Panc1 (cell line): ENCODE measurements at regions of chr6 and their contacts with region 1.

Region 1: DNA sequence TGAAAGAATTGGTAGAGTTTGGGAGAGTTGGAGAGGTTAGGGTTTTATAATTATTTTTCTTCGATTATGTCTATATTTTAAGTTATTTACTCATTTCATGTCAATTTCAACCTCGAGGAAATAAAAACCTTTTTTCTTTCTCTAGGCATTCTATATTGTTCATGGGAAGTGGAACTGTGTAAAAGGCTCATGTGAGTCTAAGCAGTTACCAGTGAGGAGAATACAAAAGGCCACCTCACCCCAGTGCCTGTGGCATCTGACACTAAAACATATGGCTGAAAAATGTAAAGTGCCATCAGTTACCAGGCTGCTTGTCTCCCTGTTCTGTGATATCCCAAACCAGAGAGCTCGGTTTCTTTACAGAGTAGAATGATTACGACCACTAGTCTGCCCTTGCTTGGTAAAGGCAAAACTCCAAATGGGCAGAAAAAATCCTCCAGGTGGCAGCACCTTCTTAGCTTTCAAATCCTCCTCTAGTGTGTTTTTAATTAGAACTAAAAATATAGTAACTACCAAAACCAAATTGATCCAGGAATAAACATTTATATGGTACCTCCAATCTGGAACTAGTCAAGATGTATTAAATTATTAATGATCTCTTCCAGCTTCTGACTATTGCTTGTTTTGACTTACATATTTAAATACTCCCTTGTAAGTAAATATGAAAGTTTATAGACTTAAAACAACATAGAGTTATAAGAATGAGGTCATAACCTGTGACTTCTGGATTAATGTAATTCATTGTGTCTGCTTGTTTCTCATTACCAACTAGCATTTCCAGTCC is 122.6 kb upstream of the MCHR2 start:
- DNase-seq: peak; percentile 56
- ATAC-seq: peak; percentile 87
- H3K4me3 ChIP-seq: no peak overlapping the region
- H3K27ac ChIP-seq: no peak overlapping the region
- H3K4me1 ChIP-seq: no peaks in the 10 kb centered on the region; the same call in 1 of the 2 replicates
- H3K27me3 ChIP-seq: no peaks in the 10 kb centered on the region
- CTCF ChIP-seq: peak; percentile 78

Region 2: DNA sequence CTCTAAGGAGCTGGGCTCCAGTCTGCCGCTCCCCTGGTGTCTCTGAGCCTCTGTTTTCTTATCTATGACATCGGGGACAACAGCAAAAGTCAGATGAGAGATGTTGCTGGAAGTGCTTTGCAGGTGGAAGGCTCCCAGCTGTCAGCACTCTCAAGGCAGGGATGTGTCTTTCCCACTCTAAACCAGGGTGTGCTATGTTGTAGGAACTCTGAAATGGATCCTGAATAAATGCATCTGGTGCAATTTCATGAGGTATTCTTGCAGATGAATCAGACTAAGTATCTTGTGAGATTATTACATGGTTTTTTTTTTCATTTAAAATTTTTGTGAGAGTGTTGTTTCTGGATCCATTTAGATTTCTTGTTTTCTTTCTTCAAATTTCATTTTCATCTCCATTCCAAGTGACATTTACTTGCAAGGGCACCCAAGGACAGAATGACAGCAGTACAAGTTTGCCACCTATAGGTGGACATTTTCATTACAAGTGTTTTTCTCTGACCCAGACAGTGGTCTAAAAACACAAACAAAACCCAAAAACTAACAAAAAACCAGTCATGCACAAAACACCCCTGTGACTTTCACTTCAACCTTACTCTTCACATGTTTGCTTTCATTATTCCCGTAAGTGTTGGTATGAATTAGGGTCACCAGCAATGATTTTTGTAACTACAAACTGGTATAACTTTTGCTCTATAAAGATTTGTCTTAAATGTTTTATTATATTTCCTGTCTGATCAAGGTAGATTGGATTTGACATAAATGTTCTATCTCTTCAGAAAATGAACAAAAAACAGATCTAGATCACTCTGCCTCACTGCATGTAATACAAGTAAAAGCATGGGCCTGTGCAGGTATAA is 362.8 kb after region 1 on chr6:
- CTCF ChIA-PET with region 1: no interaction called
- POLR2A ChIA-PET with region 1: no interaction called
- in situ Hi-C with region 1: no loop called
- intact Hi-C with region 1: loop called (anchors 1 kb)
- DNase-seq: peak; percentile 57
- ATAC-seq: peak; percentile 82
- H3K4me3 ChIP-seq: no peak overlapping the region
- H3K27ac ChIP-seq: no peak overlapping the region
- H3K4me1 ChIP-seq: no peaks in the 10 kb centered on the region
- H3K27me3 ChIP-seq: no peaks in the 10 kb centered on the region
- CTCF ChIP-seq: peak; percentile 75; the same call in 1 of the 2 replicates